ENCODE measurements at regions of chr2 and their contacts with region 1.

Region 1: DNA sequence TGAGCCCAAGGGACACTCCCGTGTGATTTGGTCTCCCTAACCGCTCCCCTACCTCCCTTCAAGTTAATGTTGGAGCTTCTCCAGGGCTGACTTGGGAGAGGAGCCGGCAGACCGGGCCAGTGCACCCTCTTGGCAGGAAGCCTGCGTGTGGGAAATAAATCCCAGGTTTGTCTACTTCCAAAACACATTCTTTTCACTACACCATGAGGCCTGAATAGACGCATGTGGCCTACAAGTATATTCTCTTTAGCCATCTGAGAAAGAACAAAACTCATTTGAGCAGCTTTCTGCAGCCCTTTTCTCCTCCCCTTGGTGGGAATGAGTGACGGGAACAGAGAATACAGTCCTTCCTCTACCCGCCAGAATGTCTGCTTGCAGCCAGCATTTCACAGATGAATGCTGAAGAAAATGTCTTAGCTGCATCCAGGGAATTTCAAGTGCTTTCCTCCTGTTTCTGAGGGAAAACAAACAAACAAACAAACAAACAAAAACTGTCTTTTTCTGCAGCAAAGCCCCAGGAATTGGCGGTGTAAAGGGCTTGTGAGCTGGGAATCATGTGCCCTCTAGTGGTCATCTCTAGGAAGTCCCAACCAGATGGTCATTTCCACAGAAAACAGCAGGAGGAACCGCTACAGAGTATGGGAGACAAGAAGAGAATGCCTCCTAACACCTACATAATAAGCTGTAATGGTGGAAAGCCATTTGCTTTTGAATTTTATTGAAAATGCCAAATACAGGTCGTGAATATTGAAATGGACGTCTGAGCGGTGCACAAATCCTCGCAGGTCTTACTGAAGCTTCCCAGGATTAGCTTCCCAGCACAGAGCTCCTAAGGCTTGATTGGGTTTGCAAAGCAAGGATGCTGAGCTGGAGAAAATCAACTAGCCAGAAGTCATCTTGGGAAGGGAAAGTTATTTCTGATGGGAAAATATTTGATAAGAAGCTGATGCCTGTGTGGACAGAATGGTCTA is 41.2 kb upstream of the DAPL1 start:
- DNase-seq: peak in 1 of 3 donors; percentile 73
- ATAC-seq: peak; percentile 86 to 90
- H3K4me3 ChIP-seq: peak overlapping the region; percentile 71
- H3K27ac ChIP-seq: peak overlapping the region; percentile 23
- H3K4me1 ChIP-seq: peaks cover 3% of the 10 kb centered on the region
- H3K27me3 ChIP-seq: no peaks in the 10 kb centered on the region

Region 2: GRCh38 chr2:157349949-157350515 is 1403.9 kb before region 1 on chr2:
- intact Hi-C with region 1: no loop called
- DNase-seq: no peak
- ATAC-seq: no peak
- H3K4me3 ChIP-seq: no peak overlapping the region
- H3K27ac ChIP-seq: no peak overlapping the region
- H3K4me1 ChIP-seq: no peaks in the 10 kb centered on the region
- H3K27me3 ChIP-seq: no peaks in the 10 kb centered on the region

Region 3: DNA sequence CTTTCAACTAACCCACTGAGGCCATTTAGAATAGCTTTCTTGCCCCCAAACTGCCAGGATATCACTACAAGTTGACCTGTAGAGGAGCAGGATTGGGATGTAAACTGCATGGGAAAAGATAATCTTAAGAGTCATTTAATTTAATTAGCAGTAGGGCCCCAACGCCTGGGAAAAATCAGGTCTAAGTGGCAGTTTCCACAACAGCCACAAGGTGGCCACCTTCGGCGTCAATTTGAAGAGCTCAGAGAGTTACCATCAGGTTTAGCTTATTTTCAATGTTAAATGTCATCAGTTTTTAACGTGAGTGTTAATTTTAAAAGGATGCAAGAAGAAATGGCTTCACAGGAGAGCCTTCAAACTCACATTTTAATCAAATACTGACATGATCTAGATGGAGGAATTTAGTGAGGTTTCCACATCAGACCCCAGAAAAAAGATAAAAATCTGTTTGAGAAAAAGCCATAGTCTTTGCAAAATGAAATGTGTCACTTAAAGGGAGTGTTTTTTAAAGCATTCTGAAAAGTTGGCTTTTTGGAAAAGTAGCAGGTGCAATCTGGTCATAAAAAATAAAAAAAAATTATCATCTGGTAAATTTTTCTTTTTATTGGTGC is 729.5 kb before region 1 on chr2:
- intact Hi-C with region 1: loop called in 2 of 4 experiments (anchors 5 kb)
- DNase-seq: peak in 2 of 3 donors; percentile 30 to 68
- ATAC-seq: peak in 1 of 2 donors; percentile 44
- H3K4me3 ChIP-seq: no peak overlapping the region
- H3K27ac ChIP-seq: no peak overlapping the region
- H3K4me1 ChIP-seq: no peaks in the 10 kb centered on the region
- H3K27me3 ChIP-seq: no peaks in the 10 kb centered on the region

Region 4: DNA sequence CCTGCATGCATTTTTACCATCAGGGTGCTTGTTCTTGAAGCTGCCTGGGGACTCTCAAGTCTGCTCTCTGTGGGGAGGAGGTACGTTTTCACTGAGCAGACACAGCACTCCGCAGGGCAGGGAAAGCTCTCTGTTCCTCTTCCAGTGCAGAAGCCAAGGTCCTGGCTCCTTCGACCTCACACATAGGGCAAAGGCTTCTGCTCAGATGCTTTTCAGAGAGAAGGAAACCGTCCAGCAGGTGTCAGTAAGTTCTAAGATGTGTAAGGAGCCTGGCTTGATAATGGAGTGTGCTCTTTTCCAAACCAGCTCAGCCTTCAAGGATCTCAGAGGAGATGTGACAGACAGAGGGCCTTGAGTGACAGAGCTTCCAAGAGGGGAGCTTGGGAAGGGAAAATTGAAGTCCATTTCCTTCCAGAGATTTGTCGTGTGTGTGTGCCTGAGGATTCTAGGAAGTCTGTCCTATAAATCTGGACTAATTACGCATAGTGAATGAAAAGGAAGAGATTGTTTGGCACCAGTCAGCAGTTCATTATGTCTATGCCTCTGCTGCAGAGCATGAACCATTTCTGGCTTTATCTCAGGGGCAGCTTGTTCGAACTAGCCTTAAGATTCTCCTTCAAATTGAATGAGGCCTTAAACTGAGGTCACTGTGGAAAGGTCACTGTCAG is 719.6 kb before region 1 on chr2:
- intact Hi-C with region 1: loop called in 3 of 4 experiments (anchors 5 kb)
- DNase-seq: no peak
- ATAC-seq: peak; percentile 79 to 82
- H3K4me3 ChIP-seq: no peak overlapping the region
- H3K27ac ChIP-seq: no peak overlapping the region
- H3K4me1 ChIP-seq: no peaks in the 10 kb centered on the region
- H3K27me3 ChIP-seq: no peaks in the 10 kb centered on the region

Region 5: DNA sequence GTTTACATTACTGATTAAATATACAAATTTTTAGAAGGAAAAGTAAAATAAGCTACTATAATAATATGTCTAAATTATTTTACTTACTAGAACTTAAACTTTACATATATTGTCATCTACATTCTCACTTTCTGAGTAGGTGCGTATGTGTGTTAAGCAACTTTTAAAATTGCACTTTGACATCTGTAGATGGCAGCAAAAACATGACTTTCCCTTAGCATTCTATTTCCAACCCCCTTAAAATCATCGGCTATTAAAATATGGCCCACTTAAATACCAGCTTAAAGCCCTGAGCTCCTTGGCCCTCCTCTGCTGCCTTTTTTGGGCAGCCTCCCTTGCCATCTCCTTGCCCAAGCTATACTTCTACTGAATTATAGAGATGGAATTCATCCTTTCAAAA is 574.3 kb before region 1 on chr2:
- intact Hi-C with region 1: loop called (anchors 2 to 10 kb)
- DNase-seq: no peak
- ATAC-seq: peak; percentile 51 to 59
- H3K4me3 ChIP-seq: no peak overlapping the region
- H3K27ac ChIP-seq: no peak overlapping the region
- H3K4me1 ChIP-seq: no peaks in the 10 kb centered on the region
- H3K27me3 ChIP-seq: no peaks in the 10 kb centered on the region

Region 6: GRCh38 chr2:158456309-158457066 is 297.4 kb before region 1 on chr2 and contains the starts of genes CCDC148 and PKP4:
- intact Hi-C with region 1: loop called in 3 of 4 experiments (anchors 5 kb)
- DNase-seq: peak; percentile 91 to 96 (median 95)
- ATAC-seq: peak; percentile 97
- H3K4me3 ChIP-seq: peak within 1 kb of the TSS; percentile 51
- H3K27ac ChIP-seq: peak within 1 kb of the TSS; percentile 53
- H3K4me1 ChIP-seq: no peaks in the 10 kb centered on the region
- H3K27me3 ChIP-seq: no peaks in the 10 kb centered on the region
- total RNA-seq, gene CCDC148: 0.70 to 2.4 (median 1.7) TPM
- total RNA-seq, gene PKP4: 49.2 to 74.8 (median 62.7) TPM

Measured in right cardiac atrium (tissue), 5 donors.